ENCODE measurements at regions of chr11 and their contacts with region 1.

Region 1: DNA sequence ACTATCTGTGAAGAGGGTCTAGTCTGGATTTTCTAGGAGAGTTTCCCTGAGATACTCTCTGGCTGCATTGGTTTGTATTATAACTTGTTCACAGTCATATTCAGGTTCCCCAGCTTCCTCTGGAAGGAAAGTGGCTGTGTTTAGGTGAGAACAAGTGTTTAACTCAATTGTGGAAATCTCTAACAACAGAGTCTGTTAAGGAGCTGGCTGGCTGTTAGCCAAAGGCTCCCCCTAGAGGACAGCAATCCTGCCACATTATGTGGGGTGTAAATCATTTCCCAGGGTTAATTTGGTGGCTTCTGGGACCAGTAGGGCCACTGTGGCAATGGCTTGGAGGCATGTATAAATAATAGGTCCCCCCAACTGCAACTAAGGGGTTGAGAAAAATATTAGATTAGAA is 18.4 kb downstream of the MS4A6E start:
- DNase-seq: peak; percentile 58
- ATAC-seq: peak; percentile 79
- H3K4me3 Mint-ChIP-seq: no peak overlapping the region
- H3K27ac Mint-ChIP-seq: no peak overlapping the region
- H3K4me1 Mint-ChIP-seq: peaks cover 26% of the 10 kb centered on the region
- H3K27me3 Mint-ChIP-seq: no peaks in the 10 kb centered on the region
- CTCF ChIP-seq: peak; percentile 46

Region 2: GRCh38 chr11:60251485-60252212 is 93.8 kb before region 1 on chr11:
- CTCF ChIA-PET with region 1: no interaction called
- POLR2A ChIA-PET with region 1: no interaction called
- DNase-seq: no peak
- ATAC-seq: peak; percentile 77
- H3K4me3 Mint-ChIP-seq: no peak overlapping the region
- H3K27ac Mint-ChIP-seq: no peak overlapping the region
- H3K4me1 Mint-ChIP-seq: peaks cover 4% of the 10 kb centered on the region; the same call in 1 of the 2 replicates
- H3K27me3 Mint-ChIP-seq: no peaks in the 10 kb centered on the region
- CTCF ChIP-seq: no peak; the same call in 1 of the 2 replicates

Region 3: DNA sequence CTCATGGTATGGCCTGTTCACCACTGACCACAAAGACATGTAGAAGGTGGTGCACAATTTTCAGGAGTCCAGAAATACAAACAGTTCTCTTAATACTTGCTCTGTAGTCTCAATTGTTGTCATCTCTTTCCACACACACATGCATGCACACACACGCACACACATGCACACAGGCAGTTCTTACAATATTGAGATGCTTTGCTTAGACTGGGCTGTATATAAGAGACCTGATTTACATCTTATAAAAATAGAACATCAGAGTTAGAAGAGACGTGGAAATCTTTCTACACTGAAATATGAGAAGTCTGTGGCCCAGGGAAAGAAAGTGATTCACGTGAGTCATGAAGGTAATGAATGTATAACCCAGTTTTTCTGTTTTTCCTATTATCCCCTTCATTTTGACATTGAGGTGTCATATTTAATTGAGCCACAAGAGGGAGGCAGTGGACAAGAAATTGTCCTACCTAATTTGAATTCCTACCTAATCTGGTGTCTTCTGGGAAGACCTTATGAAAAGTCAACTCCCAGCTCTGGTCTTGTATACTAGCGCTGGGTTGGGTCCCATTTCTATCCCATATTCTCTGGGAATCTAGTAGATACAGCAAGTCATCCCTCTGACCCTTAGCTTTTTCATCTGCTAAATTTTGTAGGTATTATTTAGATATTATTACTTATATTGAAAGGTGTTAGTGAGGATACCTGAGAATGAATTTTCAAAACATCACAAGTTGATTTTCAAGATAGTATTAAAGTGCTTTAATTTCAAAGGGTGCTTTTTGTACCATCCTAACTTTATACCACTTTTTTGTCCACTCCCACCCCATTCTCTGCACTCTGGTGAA is 79.9 kb before region 1 on chr11:
- CTCF ChIA-PET with region 1: interaction called, 70 read pairs
- POLR2A ChIA-PET with region 1: no interaction called
- DNase-seq: no peak
- ATAC-seq: peak; percentile 44
- H3K4me3 Mint-ChIP-seq: no peak overlapping the region
- H3K27ac Mint-ChIP-seq: no peak overlapping the region
- H3K4me1 Mint-ChIP-seq: 0 out of 2 replicates have a peak, but pooled peaks cover 5% of the 10 kb centered on the region
- H3K27me3 Mint-ChIP-seq: no peaks in the 10 kb centered on the region; the same call in 1 of the 2 replicates
- CTCF ChIP-seq: peak; percentile 54

Region 4: DNA sequence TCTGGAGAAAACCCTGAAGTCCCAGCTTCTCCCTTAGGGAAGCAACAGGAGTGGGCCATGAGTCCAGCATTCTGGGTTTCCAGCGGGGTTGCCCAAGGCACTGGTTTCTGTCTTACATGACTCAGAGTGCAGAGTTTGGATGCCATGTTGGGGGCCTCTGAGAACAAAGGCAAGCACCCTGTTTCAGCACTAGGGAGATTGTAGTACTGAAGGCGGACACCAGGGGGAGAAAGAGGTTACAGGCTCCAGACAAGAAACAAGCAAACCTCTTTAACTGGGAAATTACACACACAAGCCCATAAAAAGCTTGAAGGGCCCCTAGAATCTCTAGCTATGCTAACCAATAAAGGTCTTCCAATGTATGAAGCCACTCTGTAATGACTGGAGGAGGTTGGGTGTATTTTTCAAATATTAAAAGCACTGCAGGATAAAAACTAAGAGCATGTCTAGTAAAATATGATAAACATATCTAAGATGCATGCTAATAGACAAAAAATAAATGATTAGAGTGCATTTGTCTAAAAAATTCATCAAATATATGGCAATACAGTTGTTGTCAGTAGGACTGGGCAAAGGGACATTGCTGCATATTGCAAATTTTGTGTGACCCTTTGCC is 11.4 kb before region 1 on chr11:
- CTCF ChIA-PET with region 1: interaction called, 17 read pairs
- POLR2A ChIA-PET with region 1: no interaction called
- DNase-seq: peak; percentile 86
- ATAC-seq: peak; percentile 95
- H3K4me3 Mint-ChIP-seq: no peak overlapping the region
- H3K27ac Mint-ChIP-seq: no peak overlapping the region
- H3K4me1 Mint-ChIP-seq: peaks cover 24% of the 10 kb centered on the region
- H3K27me3 Mint-ChIP-seq: no peaks in the 10 kb centered on the region
- CTCF ChIP-seq: peak; percentile 86

Region 5: DNA sequence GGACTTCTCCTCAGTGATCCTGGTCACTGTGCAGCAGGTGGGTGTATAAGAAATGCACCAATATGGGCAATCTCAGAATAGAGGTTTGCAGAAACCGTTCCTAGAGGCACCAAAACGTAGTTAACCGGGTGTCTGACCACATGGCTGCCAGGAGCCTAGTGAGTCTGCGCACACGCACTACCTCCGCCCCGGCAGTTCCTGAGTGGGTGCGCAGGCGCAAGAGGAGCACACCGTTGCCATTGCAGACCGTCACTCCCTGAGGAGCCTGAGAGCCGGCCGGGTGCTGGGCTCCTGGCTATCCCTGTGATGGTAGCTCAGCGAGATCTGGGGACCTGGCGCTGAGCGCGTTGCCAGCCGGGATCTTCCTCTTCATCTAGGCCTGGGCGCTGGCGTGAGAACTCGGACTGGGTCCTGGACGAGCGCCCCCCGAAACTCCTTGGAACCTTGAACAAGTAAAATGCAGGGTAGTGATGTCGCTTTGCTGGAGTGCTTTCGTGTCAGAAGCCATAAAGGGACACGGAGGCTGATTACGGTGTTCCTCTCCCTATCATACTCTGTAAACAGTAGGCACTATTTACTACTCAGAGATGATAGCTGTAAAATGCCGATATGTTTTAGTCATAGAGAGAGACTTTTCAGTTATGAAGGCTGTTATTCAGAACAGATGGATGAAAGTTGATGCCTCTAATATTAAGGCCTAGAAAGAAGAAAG is 169.8 kb after region 1 on chr11 and contains the start of gene MS4A13:
- CTCF ChIA-PET with region 1: no interaction called
- POLR2A ChIA-PET with region 1: no interaction called
- DNase-seq: no peak
- ATAC-seq: no peak
- H3K4me3 Mint-ChIP-seq: no peak within 1 kb of the TSS
- H3K27ac Mint-ChIP-seq: no peak within 1 kb of the TSS
- H3K4me1 Mint-ChIP-seq: peaks cover 6% of the 10 kb centered on the region
- H3K27me3 Mint-ChIP-seq: no peaks in the 10 kb centered on the region; the same call in 1 of the 2 replicates
- CTCF ChIP-seq: no peak
- total RNA-seq, gene MS4A13: not detected in 3 replicates

Region 6: GRCh38 chr11:60615497-60615896 is 270.0 kb after region 1 on chr11:
- CTCF ChIA-PET with region 1: interaction called, 15 read pairs
- POLR2A ChIA-PET with region 1: no interaction called
- DNase-seq: no peak
- ATAC-seq: no peak
- H3K4me3 Mint-ChIP-seq: no peak overlapping the region
- H3K27ac Mint-ChIP-seq: no peak overlapping the region
- H3K4me1 Mint-ChIP-seq: no peaks in the 10 kb centered on the region
- H3K27me3 Mint-ChIP-seq: no peaks in the 10 kb centered on the region; the same call in 1 of the 2 replicates
- CTCF ChIP-seq: no peak

Region 7: GRCh38 chr11:60634126-60634525 is 288.6 kb after region 1 on chr11:
- CTCF ChIA-PET with region 1: interaction called, 23 read pairs
- POLR2A ChIA-PET with region 1: no interaction called
- DNase-seq: peak; percentile 57
- ATAC-seq: peak; percentile 99
- H3K4me3 Mint-ChIP-seq: no peak overlapping the region
- H3K27ac Mint-ChIP-seq: no peak overlapping the region
- H3K4me1 Mint-ChIP-seq: no peaks in the 10 kb centered on the region
- H3K27me3 Mint-ChIP-seq: peaks cover 7% of the 10 kb centered on the region; the same call in 1 of the 2 replicates
- CTCF ChIP-seq: peak; percentile 58; the same call in 1 of the 2 replicates